Activated B cell treated with CpG ODN at 0.5 μM for 24 hours (primary cell): ENCODE measurements at regions of chr2 and their contacts with region 1.

Region 1: GRCh38 chr2:161160226-161161069 is at the start of gene TANK:
- DNase-seq: peak; percentile 82
- ATAC-seq: peak; percentile 92
- H3K4me3 Mint-ChIP-seq: peak within 1 kb of the TSS; percentile 89
- H3K27ac Mint-ChIP-seq: peak within 1 kb of the TSS; percentile 91
- H3K4me1 Mint-ChIP-seq: peaks cover 77% of the 10 kb centered on the region
- H3K27me3 Mint-ChIP-seq: no peaks in the 10 kb centered on the region
- CTCF ChIP-seq: no peak
- total RNA-seq, gene TANK: 130 and 150 TPM in 2 replicates

Region 2: DNA sequence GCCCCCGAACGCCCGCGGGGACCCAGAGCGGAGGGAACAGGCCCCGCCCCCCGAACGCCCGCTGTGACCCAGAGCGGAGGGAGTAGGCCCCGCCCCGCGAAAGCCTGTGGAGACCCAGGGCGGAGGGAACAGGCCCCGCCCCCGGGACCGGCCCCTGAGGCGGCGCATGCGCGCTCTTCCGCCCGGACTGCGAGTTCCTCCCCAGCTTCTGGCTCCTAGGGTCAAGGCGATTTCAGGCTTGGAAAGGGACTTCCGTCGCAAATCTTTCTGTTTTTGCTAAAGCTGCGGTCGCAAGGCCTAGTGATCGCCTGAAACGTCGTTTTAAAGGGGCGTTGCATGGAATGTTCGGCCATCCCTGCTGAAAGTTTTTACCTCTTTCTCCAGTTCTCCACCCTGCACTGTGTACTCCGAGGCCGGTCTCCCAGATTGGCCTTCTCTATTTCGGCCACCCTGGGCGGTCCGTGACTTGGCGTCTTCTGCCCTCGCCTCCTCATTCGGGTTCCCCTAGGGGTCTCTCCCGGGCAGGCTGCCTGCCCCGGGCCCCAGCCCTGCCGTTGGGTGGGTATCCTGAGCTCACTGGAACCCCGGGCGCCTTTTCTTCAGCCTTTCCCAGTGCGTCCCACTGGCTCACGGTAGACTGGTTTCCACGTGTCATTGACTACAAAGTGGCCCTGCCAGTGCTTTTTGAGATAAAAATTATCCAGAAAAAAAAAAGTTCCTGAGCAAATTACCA is 1873.6 kb before region 1 on chr2:
- CTCF ChIA-PET with region 1: no interaction called
- POLR2A ChIA-PET with region 1: no interaction called
- intact Hi-C with region 1: loop called (anchors 10 kb)
- DNase-seq: peak; percentile 97
- ATAC-seq: peak; percentile 99
- H3K4me3 Mint-ChIP-seq: peak overlapping the region; percentile 93
- H3K27ac Mint-ChIP-seq: peak overlapping the region; percentile 84
- H3K4me1 Mint-ChIP-seq: peaks cover 41% of the 10 kb centered on the region
- H3K27me3 Mint-ChIP-seq: peaks cover 2% of the 10 kb centered on the region
- CTCF ChIP-seq: no peak

Region 3: GRCh38 chr2:161063157-161063954 is 97.1 kb before region 1 on chr2:
- CTCF ChIA-PET with region 1: interaction called, 5 read pairs
- POLR2A ChIA-PET with region 1: no interaction called
- intact Hi-C with region 1: loop called (anchors 1 kb)
- DNase-seq: peak; percentile 18
- ATAC-seq: peak; percentile 93
- H3K4me3 Mint-ChIP-seq: no peak overlapping the region
- H3K27ac Mint-ChIP-seq: no peak overlapping the region
- H3K4me1 Mint-ChIP-seq: peaks cover 4% of the 10 kb centered on the region
- H3K27me3 Mint-ChIP-seq: no peaks in the 10 kb centered on the region
- CTCF ChIP-seq: peak; percentile 94

Region 4: GRCh38 chr2:161136696-161137324 is 23.6 kb before region 1 on chr2:
- CTCF ChIA-PET with region 1: no interaction called
- POLR2A ChIA-PET with region 1: interaction called, 23 read pairs
- intact Hi-C with region 1: loop called (anchors 1 kb)
- DNase-seq: no peak
- ATAC-seq: peak; percentile 88
- H3K4me3 Mint-ChIP-seq: peak overlapping the region; percentile 96
- H3K27ac Mint-ChIP-seq: peak overlapping the region; percentile 99
- H3K4me1 Mint-ChIP-seq: peaks cover 50% of the 10 kb centered on the region
- H3K27me3 Mint-ChIP-seq: no peaks in the 10 kb centered on the region
- CTCF ChIP-seq: no peak

Region 5: DNA sequence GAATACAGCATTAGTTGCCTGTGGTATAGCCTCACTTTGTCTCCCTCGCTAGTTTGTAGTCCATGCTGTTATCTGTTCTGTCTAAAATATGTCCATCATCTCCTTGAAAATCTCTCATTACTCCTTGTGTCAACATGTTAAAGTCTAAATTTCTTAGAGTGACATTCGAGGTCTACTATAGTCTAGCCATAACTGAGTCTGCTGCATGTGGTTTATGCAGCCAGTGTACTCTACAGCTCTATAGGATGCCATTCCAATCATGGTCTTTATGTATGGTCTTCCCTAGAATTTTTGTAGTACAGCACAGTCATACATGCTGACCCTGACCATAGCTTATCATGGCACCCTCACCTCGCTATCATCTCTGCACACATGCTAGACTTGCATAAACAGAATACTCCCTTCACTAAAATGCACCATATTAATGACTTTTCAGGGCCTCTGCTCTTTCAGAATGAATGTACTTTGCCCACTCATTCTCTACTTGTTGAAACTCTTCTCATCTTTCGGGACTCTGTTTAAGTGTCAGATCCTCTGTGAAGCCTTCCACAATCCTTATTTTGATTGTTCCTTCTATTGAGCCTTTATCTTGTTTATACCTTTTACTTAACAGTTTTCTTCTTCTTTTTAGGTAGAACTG is 12.6 kb after region 1 on chr2:
- CTCF ChIA-PET with region 1: no interaction called
- POLR2A ChIA-PET with region 1: interaction called, 7 read pairs
- intact Hi-C with region 1: loop called (anchors 1 kb)
- DNase-seq: no peak
- ATAC-seq: no peak
- H3K4me3 Mint-ChIP-seq: peak overlapping the region; percentile 21
- H3K27ac Mint-ChIP-seq: peak overlapping the region; percentile 63
- H3K4me1 Mint-ChIP-seq: peaks cover 92% of the 10 kb centered on the region
- H3K27me3 Mint-ChIP-seq: no peaks in the 10 kb centered on the region
- CTCF ChIP-seq: no peak

Region 6: GRCh38 chr2:161308178-161308955 is 147.9 kb after region 1 on chr2 and contains the start of gene PSMD14:
- CTCF ChIA-PET with region 1: no interaction called
- POLR2A ChIA-PET with region 1: no interaction called
- intact Hi-C with region 1: loop called (anchors 1 kb)
- DNase-seq: peak; percentile 80
- ATAC-seq: peak; percentile 92
- H3K4me3 Mint-ChIP-seq: peak within 1 kb of the TSS; percentile 99
- H3K27ac Mint-ChIP-seq: peak within 1 kb of the TSS; percentile 97
- H3K4me1 Mint-ChIP-seq: peaks cover 33% of the 10 kb centered on the region
- H3K27me3 Mint-ChIP-seq: no peaks in the 10 kb centered on the region
- CTCF ChIP-seq: no peak
- total RNA-seq, gene PSMD14: 55.0 and 55.1 TPM in 2 replicates